Posterior vena cava (tissue), 2 donors: ENCODE measurements at regions of chr16 and their contacts with region 1.

Region 1: DNA sequence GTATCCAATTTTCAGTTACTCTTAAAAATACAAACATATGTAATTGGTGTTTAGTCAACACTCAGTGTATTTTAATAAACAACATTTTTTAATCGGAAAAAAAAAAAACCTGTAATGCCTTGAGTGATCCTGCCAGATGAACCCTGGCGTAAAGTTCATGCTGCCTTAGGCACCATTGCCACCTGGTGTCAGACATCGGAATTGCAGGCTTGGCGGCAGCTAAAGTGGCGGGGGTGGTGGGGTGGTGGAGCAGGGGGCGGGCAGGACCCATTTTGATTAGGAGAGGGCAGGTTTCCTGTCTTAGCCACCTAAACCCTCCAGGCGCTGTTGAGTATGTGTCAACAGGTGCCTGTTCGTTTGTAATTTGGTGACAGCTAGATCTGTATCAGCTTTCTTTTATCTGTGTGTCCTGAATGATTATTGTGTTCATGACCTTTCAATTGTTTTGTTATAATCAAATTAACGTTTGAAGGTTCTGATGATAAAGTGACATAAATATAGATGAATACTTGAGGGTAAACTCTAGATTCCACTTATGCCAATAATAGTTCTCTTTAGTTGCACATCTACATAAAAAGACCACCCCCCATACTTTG is 588.7 kb downstream of the CDH13 start:
- DNase-seq: no peak

Region 2: DNA sequence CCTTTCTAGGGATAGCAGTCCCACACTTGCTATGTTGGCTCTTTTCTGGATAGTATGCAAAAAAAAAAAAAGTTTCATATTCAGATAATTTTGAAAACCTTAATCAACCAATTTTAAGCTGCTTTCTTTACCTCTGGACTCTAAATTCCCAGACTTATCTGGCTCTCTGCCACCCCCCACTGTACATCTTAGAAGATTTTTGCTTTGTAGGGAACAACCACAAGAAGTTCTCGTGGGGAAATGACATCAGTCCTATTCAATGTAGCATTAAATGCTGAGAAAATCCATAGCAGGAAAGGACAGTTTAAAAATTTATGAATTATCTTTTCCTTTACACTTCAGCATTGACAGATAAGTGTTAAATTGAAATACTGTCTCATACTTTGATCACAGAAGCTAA is 29.6 kb after region 1 on chr16:
- intact Hi-C with region 1: no loop called
- DNase-seq: no peak

Region 3: GRCh38 chr16:83272843-83273242 is 57.3 kb after region 1 on chr16:
- intact Hi-C with region 1: no loop called
- DNase-seq: no peak

Region 4: GRCh38 chr16:83344014-83344413 is 128.5 kb after region 1 on chr16:
- intact Hi-C with region 1: no loop called
- DNase-seq: no peak

Region 5: GRCh38 chr16:83389751-83390150 is 174.2 kb after region 1 on chr16:
- intact Hi-C with region 1: loop called in 1 of 2 experiments (anchors 5 kb)
- DNase-seq: no peak

Region 6: DNA sequence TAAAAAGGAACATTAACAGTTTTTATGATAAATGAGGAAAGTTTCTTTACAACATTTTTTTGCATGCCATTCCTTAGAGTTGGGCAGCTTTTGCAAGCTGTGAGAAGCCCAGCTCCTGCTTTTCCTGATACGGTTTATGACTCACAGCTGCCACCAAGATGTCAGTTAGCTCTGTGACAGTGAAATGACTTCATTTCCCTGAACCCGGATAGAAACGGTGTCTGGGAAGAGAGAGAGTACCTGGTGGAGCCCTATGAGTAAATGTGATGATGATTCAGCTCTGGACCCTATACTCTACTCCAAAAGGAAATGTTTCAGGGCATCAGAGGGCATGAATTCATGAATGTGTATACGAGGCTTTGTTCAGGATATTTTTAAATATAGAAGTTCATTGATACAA is 226.0 kb after region 1 on chr16:
- intact Hi-C with region 1: no loop called
- DNase-seq: no peak